ENCODE measurements at regions of chr5 and their contacts with region 1.

Region 1: DNA sequence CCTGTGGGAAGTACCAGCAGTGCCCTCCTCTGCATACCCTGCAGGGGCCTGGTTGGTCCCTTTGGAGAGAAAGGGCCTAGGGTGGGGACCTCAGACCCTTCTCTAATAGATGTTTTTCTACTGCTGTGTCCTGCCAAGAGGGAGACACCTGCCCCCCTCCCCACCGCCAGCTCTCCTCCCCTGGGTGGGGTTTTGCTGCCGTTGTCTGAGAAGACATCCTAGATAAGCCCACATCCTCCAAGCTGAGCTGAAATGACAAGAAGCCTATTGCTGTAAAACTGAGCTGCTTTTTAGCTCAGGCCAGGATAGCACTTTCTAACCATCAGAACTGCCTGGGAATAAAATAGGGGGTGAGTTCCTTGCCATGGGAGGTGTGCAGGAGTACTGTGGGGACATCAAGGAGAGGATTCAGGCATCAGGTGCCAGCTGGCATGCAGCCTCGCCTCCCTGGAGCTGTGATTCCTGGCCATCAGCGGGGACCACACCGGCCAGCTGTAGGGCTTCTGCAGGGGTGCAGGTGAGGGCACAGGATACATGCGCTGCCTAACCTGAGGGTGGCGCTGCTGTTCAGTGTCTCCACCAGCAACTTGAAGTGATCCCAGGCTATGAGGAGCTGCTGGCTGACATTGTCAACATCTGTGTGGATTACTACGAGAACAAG is 37.9 kb downstream of the CYFIP2 start:
- DNase-seq: peak; percentile 33 to 61
- ATAC-seq: peak in 7 of 8 donors; percentile 54 to 85 (median 77)
- H3K4me3 ChIP-seq: no peak overlapping the region
- H3K27ac ChIP-seq: peak overlapping the region in 1 of 10 donors; percentile 21
- H3K4me1 ChIP-seq: peaks cover 0 to 10% (median 0%) of the 10 kb centered on the region in 9 donors
- H3K27me3 ChIP-seq: no peaks in the 10 kb centered on the region
- CTCF ChIP-seq: peak in 7 of 9 donors; percentile 22 to 44 (median 40)

Region 2: GRCh38 chr5:157259699-157260098 is 44.1 kb before region 1 on chr5:
- intact Hi-C with region 1: loop called in 5 of 10 experiments (anchors 2 to 5 kb)
- DNase-seq: no peak
- ATAC-seq: no peak
- H3K4me3 ChIP-seq: no peak overlapping the region
- H3K27ac ChIP-seq: no peak overlapping the region
- H3K4me1 ChIP-seq: peaks cover 0 to 11% (median 0%) of the 10 kb centered on the region in 9 donors
- H3K27me3 ChIP-seq: no peaks in the 10 kb centered on the region
- CTCF ChIP-seq: no peak

Region 3: GRCh38 chr5:157265714-157266285 is 38.0 kb before region 1 on chr5 and contains the start of gene CYFIP2:
- intact Hi-C with region 1: loop called in 3 of 10 experiments (anchors 5 kb)
- DNase-seq: peak in 1 of 2 donors; percentile 70
- ATAC-seq: peak; percentile 73 to 92 (median 80)
- H3K4me3 ChIP-seq: peak within 1 kb of the TSS; percentile 16 to 82 (median 68)
- H3K27ac ChIP-seq: peak within 1 kb of the TSS; percentile 43 to 90 (median 74)
- H3K4me1 ChIP-seq: peaks cover 0 to 61% (median 15%) of the 10 kb centered on the region in 9 donors
- H3K27me3 ChIP-seq: peaks cover 0 to 6% (median 0%) of the 10 kb centered on the region in 7 donors
- CTCF ChIP-seq: no peak
- total RNA-seq, gene CYFIP2: 20.3 to 50.8 (median 34.4) TPM

Region 4: GRCh38 chr5:157528036-157528632 is 224.3 kb after region 1 on chr5:
- intact Hi-C with region 1: no loop called
- DNase-seq: peak in 1 of 2 donors; percentile 47
- ATAC-seq: peak; percentile 24 to 74 (median 62)
- H3K4me3 ChIP-seq: no peak overlapping the region
- H3K27ac ChIP-seq: peak overlapping the region in 4 of 10 donors; percentile 30 to 69 (median 56)
- H3K4me1 ChIP-seq: peaks cover 0 to 63% (median 32%) of the 10 kb centered on the region in 9 donors
- H3K27me3 ChIP-seq: no peaks in the 10 kb centered on the region
- CTCF ChIP-seq: no peak

Measured in heart right ventricle (tissue), 16 donors.